HepG2 (cell line): ENCODE measurements at regions of chr2 and their contacts with region 1.

Region 1: GRCh38 chr2:232190796-232191195 is 187.8 kb upstream of the ALPP start:
- DNase-seq: no peak
- ATAC-seq: no peak
- H3K4me3 ChIP-seq: no peak overlapping the region
- H3K27ac ChIP-seq: no peak overlapping the region
- H3K4me1 ChIP-seq: no peaks in the 10 kb centered on the region
- H3K27me3 ChIP-seq: no peaks in the 10 kb centered on the region
- CTCF ChIP-seq: no peak
- EP300 ChIP-seq: no peak
- POLR2A ChIP-seq: no peak
- RAD21 ChIP-seq: no peak

Region 2: DNA sequence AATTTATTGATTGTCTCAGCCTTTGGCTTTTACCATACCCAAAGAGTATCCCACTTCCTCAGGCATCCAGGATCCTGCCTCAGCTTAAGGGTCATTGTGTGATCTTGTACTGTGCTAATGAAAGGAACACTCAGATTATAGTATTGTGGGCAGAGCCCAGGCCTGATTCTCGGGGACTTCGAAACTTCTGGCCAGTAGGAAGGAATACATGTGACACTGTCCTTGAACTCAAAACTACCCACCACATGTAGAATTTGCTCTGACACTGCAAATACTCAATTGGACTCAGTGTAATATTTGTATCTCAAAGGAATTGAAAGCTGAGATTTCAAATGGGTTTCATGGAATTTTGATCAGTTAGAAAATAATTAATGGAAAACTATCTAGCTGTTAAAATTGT is 213.4 kb before region 1 on chr2:
- CTCF ChIA-PET with region 1: no interaction called
- POLR2A ChIA-PET with region 1: no interaction called
- in situ Hi-C with region 1: no loop called
- intact Hi-C with region 1: no loop called
- DNase-seq: peak; percentile 51
- ATAC-seq: peak; percentile 76
- H3K4me3 ChIP-seq: no peak overlapping the region
- H3K27ac ChIP-seq: peak overlapping the region; percentile 30
- H3K4me1 ChIP-seq: peaks cover 12% of the 10 kb centered on the region
- H3K27me3 ChIP-seq: no peaks in the 10 kb centered on the region
- CTCF ChIP-seq: no peak
- EP300 ChIP-seq: no peak
- POLR2A ChIP-seq: no peak
- RAD21 ChIP-seq: no peak

Region 3: DNA sequence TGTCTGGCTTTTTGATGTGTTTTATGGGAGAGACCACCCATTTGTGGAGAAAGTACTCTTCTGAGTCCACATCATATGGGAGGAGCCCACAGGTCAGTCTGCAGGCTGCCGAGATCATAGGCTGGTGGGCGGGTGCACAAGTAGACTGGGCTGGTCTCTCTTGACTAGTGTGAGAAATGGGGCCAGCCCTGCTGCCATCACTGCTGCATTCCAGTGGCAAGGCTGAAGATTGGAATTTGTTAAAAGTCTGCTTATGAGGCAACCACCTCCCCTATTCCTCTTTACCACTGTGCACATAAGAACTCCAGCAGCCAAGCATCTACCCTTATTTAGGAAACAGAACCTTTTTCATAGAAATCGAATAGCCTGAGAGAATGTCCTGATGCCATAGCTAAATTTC is 28.6 kb before region 1 on chr2:
- CTCF ChIA-PET with region 1: no interaction called
- POLR2A ChIA-PET with region 1: no interaction called
- in situ Hi-C with region 1: no loop called
- intact Hi-C with region 1: loop called (anchors 1 kb)
- DNase-seq: no peak
- ATAC-seq: no peak
- H3K4me3 ChIP-seq: no peak overlapping the region
- H3K27ac ChIP-seq: no peak overlapping the region
- H3K4me1 ChIP-seq: no peaks in the 10 kb centered on the region
- H3K27me3 ChIP-seq: no peaks in the 10 kb centered on the region
- CTCF ChIP-seq: no peak
- EP300 ChIP-seq: no peak
- POLR2A ChIP-seq: no peak
- RAD21 ChIP-seq: no peak

Region 4: DNA sequence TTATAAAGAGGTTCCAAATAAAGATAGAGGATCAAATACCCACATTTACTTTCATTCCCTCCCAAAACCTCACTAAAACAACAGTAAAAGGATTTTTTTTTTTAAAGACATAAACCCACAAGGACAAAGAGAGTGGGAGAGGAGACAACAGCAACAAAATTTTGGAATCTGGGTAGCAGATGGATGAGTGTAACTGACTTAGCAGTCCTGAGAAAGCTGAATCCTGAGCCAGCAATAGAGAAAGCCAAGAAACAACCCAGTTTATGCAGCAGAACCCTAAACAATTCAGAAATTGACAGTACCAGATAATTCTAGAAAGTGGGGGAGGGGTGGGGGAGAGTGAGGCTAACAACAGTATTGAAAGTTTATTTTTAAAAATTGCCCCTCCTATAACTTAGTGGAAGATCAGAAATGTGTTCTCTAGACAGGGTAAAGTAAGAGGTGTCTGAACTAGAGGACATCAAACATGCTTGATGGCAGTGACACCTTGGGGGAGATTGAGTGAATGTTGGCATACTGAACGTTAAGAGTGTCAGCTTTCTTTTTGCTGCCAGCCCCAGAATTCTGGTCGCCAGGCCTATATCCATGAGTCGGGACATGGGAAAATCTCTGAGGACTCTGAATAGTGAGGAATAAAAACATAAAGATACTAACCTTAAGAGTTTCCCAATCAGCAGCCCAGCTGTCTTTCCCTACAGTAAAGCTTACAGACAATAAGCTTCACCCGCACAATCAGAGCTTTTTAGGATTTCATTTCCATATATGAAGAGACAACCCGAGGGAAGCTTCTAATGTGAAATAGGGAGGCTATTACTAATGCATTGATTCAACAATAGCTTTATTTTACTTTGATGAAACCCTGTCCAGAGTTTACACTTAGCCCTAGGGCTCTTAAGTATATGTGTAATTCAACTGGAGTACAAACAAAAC is 59.7 kb after region 1 on chr2:
- CTCF ChIA-PET with region 1: no interaction called
- POLR2A ChIA-PET with region 1: no interaction called
- in situ Hi-C with region 1: no loop called
- intact Hi-C with region 1: no loop called
- DNase-seq: no peak
- ATAC-seq: no peak
- H3K4me3 ChIP-seq: no peak overlapping the region
- H3K27ac ChIP-seq: no peak overlapping the region
- H3K4me1 ChIP-seq: no peaks in the 10 kb centered on the region
- H3K27me3 ChIP-seq: no peaks in the 10 kb centered on the region
- CTCF ChIP-seq: no peak
- EP300 ChIP-seq: no peak
- POLR2A ChIP-seq: no peak
- RAD21 ChIP-seq: no peak